CD8-positive, alpha-beta T cell (primary cell): ENCODE measurements at regions of chr16 and their contacts with region 1.

Region 1: DNA sequence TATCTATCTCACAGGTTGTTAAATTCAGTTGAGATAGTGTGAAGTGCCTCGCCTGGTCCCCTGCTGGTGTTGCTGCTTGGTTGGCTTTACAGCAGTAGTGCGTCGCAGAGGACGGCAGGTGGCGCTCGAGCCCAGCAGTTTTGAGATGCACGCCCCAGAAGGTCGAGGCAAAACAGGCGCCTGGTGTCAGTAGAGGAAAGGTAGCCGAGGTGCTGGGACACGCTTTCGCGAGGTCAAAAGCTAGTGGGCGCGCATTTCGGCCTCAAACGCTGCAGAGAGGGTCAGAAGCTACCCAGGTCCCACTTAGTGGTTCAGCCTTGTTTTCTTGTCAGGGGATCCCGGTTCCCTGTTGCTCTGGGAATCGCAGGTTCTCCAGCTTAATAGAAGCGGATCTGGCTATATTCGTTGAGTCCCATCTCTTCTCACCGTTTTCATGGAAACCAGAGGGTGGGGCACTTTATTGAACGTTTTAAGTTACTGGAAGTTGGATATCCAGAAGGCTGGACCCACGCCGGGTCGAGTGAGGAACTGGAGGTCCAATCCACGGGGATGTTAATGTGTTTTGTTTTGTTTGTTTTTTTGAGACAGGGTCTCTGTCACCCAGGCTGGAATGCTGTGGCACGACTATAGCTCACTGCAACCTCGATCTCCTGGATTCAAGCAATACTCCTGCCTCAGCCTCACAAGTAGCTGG is 10.3 kb upstream of the ZFP90 start:
- DNase-seq: peak; percentile 84 to 93 (median 90)
- ATAC-seq: peak; percentile 80
- H3K4me3 ChIP-seq: no peak overlapping the region
- H3K4me3 Mint-ChIP-seq: peak overlapping the region; percentile 72
- H3K27ac ChIP-seq: no peak overlapping the region
- H3K27ac Mint-ChIP-seq: peak overlapping the region; percentile 28
- H3K4me1 ChIP-seq: peaks cover 21% of the 10 kb centered on the region
- H3K4me1 Mint-ChIP-seq: peaks cover 23% of the 10 kb centered on the region
- H3K27me3 ChIP-seq: no peaks in the 10 kb centered on the region
- H3K27me3 Mint-ChIP-seq: no peaks in the 10 kb centered on the region
- CTCF ChIP-seq: peak; percentile 94

Region 2: GRCh38 chr16:68538880-68539701 is 10.3 kb after region 1 on chr16 and contains the start of gene ZFP90:
- CTCF ChIA-PET with region 1: interaction called, 15 read pairs
- POLR2A ChIA-PET with region 1: interaction called, 5 read pairs
- intact Hi-C with region 1: loop called (anchors 1 kb)
- DNase-seq: peak; percentile 63 to 92 (median 83)
- ATAC-seq: peak; percentile 85
- H3K4me3 ChIP-seq: peak within 1 kb of the TSS; percentile 88 to 96
- H3K4me3 Mint-ChIP-seq: peak within 1 kb of the TSS; percentile 96
- H3K27ac ChIP-seq: peak within 1 kb of the TSS; percentile 92 to 94
- H3K27ac Mint-ChIP-seq: peak within 1 kb of the TSS; percentile 100
- H3K4me1 ChIP-seq: peaks cover 16% of the 10 kb centered on the region
- H3K4me1 Mint-ChIP-seq: peaks cover 25% of the 10 kb centered on the region
- H3K27me3 ChIP-seq: no peaks in the 10 kb centered on the region
- H3K27me3 Mint-ChIP-seq: no peaks in the 10 kb centered on the region
- CTCF ChIP-seq: no peak
- total RNA-seq, gene ZFP90: 17.0 to 23.5 TPM

Region 3: GRCh38 chr16:68599586-68599985 is 70.8 kb after region 1 on chr16:
- CTCF ChIA-PET with region 1: interaction called, 112 read pairs
- POLR2A ChIA-PET with region 1: no interaction called
- intact Hi-C with region 1: loop called (anchors 1 to 5 kb)
- DNase-seq: no peak
- ATAC-seq: no peak
- H3K4me3 ChIP-seq: no peak overlapping the region
- H3K4me3 Mint-ChIP-seq: no peak overlapping the region
- H3K27ac ChIP-seq: no peak overlapping the region
- H3K27ac Mint-ChIP-seq: no peak overlapping the region
- H3K4me1 ChIP-seq: no peaks in the 10 kb centered on the region
- H3K4me1 Mint-ChIP-seq: no peaks in the 10 kb centered on the region
- H3K27me3 ChIP-seq: no peaks in the 10 kb centered on the region
- H3K27me3 Mint-ChIP-seq: no peaks in the 10 kb centered on the region
- CTCF ChIP-seq: no peak

Region 4: GRCh38 chr16:68704232-68704867 is 175.5 kb after region 1 on chr16:
- CTCF ChIA-PET with region 1: no interaction called
- POLR2A ChIA-PET with region 1: no interaction called
- intact Hi-C with region 1: loop called in 1 of 2 experiments (anchors 1 kb)
- DNase-seq: peak; percentile 5 to 68 (median 49)
- ATAC-seq: peak; percentile 49
- H3K4me3 ChIP-seq: no peak overlapping the region
- H3K4me3 Mint-ChIP-seq: no peak overlapping the region
- H3K27ac ChIP-seq: no peak overlapping the region
- H3K27ac Mint-ChIP-seq: no peak overlapping the region
- H3K4me1 ChIP-seq: no peaks in the 10 kb centered on the region
- H3K4me1 Mint-ChIP-seq: peaks cover 2% of the 10 kb centered on the region
- H3K27me3 ChIP-seq: no peaks in the 10 kb centered on the region
- H3K27me3 Mint-ChIP-seq: no peaks in the 10 kb centered on the region
- CTCF ChIP-seq: peak; percentile 53

Region 5: GRCh38 chr16:68843482-68844210 is 314.8 kb after region 1 on chr16 and contains the start of gene TANGO6:
- CTCF ChIA-PET with region 1: interaction called, 5 read pairs
- POLR2A ChIA-PET with region 1: no interaction called
- intact Hi-C with region 1: loop called (anchors 1 kb)
- DNase-seq: peak; percentile 81 to 93 (median 90)
- ATAC-seq: peak; percentile 95
- H3K4me3 ChIP-seq: peak within 1 kb of the TSS; percentile 86 to 94
- H3K4me3 Mint-ChIP-seq: peak within 1 kb of the TSS; percentile 92
- H3K27ac ChIP-seq: peak within 1 kb of the TSS; percentile 78 to 86
- H3K27ac Mint-ChIP-seq: peak within 1 kb of the TSS; percentile 89
- H3K4me1 ChIP-seq: peaks cover 24% of the 10 kb centered on the region
- H3K4me1 Mint-ChIP-seq: peaks cover 29% of the 10 kb centered on the region
- H3K27me3 ChIP-seq: no peaks in the 10 kb centered on the region
- H3K27me3 Mint-ChIP-seq: no peaks in the 10 kb centered on the region
- CTCF ChIP-seq: no peak
- total RNA-seq, gene TANGO6: 12.1 to 16.3 TPM

Region 6: GRCh38 chr16:69123910-69124309 is 595.1 kb after region 1 on chr16:
- CTCF ChIA-PET with region 1: interaction called, 47 read pairs
- POLR2A ChIA-PET with region 1: no interaction called
- intact Hi-C with region 1: loop called (anchors 1 kb)
- DNase-seq: peak; percentile 28 to 84 (median 65)
- ATAC-seq: peak; percentile 89
- H3K4me3 ChIP-seq: no peak overlapping the region
- H3K4me3 Mint-ChIP-seq: no peak overlapping the region
- H3K27ac ChIP-seq: no peak overlapping the region
- H3K27ac Mint-ChIP-seq: no peak overlapping the region
- H3K4me1 ChIP-seq: no peaks in the 10 kb centered on the region
- H3K4me1 Mint-ChIP-seq: peaks cover 28% of the 10 kb centered on the region
- H3K27me3 ChIP-seq: no peaks in the 10 kb centered on the region
- H3K27me3 Mint-ChIP-seq: no peaks in the 10 kb centered on the region
- CTCF ChIP-seq: peak; percentile 83